GM12878 (cell line): ENCODE measurements at regions of chr3 and their contacts with region 1.

Region 1: GRCh38 chr3:61530355-61530754 is 31.0 kb upstream of the PTPRG start:
- DNase-seq: no peak
- ATAC-seq: peak; percentile 81
- H3K4me3 ChIP-seq: no peak overlapping the region
- H3K27ac ChIP-seq: no peak overlapping the region
- H3K4me1 ChIP-seq: no peaks in the 10 kb centered on the region
- H3K27me3 ChIP-seq: no peaks in the 10 kb centered on the region
- CTCF ChIP-seq: peak; percentile 51 to 53 (median 52)
- EP300 ChIP-seq: no peak
- POLR2A ChIP-seq: no peak
- RAD21 ChIP-seq: peak; percentile 54

Region 2: DNA sequence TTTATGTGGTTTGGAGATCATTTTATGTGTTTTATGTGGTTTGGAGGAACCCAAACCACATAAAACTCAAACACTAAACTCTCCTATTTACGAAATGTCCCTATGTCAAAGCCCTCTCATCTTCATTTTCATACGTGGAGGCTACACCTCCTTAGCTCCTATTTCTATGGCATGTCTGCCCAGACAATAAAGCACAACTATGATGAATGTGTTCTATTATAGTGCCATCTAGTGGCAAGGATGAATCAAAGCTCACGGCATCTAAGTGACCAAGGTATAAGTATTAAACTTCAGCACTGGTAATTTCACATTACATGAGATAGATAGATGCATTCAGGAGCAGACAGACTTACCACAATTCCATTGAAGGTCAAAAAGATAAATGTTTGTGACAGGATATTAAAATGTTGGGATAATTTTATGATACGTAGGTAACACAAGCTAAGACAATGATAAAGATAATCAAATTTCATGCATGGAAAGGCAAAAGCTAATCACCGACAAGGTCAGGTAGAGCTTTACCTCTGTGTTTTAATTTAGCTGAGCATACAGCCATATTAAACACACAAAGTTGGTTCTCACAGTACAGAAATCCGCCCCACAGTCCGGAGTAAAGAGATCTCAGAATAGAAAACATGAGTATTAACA is 148.5 kb before region 1 on chr3:
- CTCF ChIA-PET with region 1: interaction called, 51 read pairs
- POLR2A ChIA-PET with region 1: no interaction called
- RAD21 ChIA-PET with region 1: interaction called, 29 read pairs
- SMC1A ChIA-PET with region 1: interaction called, 23 read pairs
- in situ Hi-C with region 1: no loop called
- intact Hi-C with region 1: loop called (anchors 10 kb)
- DNase-seq: no peak
- ATAC-seq: peak; percentile 99
- H3K4me3 ChIP-seq: no peak overlapping the region
- H3K27ac ChIP-seq: no peak overlapping the region
- H3K4me1 ChIP-seq: no peaks in the 10 kb centered on the region
- H3K27me3 ChIP-seq: no peaks in the 10 kb centered on the region; a peak in 1 of 4 replicates
- CTCF ChIP-seq: peak; percentile 58 to 73 (median 61); a peak in 5 of 6 replicates
- EP300 ChIP-seq: no peak
- POLR2A ChIP-seq: no peak
- RAD21 ChIP-seq: peak; percentile 85

Region 3: DNA sequence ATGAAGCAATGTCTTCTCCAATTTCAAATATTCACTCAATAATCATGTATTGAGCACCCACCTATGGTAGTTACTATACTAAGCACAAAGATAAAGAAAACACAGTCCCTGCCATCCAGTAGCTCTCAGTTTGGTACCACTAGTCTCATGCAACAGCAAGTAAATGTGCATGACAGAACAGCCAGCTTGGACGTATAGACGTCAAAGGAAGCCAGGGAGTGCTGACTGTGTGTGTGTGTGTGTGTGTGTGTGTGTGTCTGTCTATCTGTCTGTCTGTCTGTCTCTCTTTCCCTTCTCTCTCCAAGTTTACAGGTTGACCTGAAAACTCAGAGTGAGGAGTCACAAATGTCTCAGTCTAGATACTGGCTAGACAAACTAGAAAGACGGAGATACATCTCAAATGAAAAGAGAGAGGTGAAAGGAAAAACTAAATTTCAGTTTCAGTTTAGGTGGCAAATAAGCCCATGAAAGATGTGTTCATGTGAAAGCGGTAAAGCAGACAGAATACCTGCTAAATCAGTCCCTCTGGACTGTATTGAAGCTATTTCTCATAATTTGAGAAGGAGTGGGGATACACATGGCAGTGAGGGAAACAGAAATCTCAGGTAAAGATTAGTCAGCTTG is 110.1 kb before region 1 on chr3:
- CTCF ChIA-PET with region 1: interaction called, 29 read pairs
- POLR2A ChIA-PET with region 1: no interaction called
- RAD21 ChIA-PET with region 1: interaction called, 5 read pairs
- SMC1A ChIA-PET with region 1: interaction called, 7 read pairs
- in situ Hi-C with region 1: no loop called
- intact Hi-C with region 1: no loop called
- DNase-seq: no peak
- ATAC-seq: peak; percentile 91
- H3K4me3 ChIP-seq: no peak overlapping the region
- H3K27ac ChIP-seq: no peak overlapping the region
- H3K4me1 ChIP-seq: peaks cover 3% of the 10 kb centered on the region; the same call in 1 of the 2 replicates
- H3K27me3 ChIP-seq: no peaks in the 10 kb centered on the region
- CTCF ChIP-seq: no peak
- EP300 ChIP-seq: peak in 1 of 2 experiments; percentile 46; a peak in 1 of 4 replicates
- POLR2A ChIP-seq: no peak
- RAD21 ChIP-seq: no peak

Region 4: GRCh38 chr3:61452535-61453090 is 77.7 kb before region 1 on chr3:
- CTCF ChIA-PET with region 1: interaction called, 7 read pairs
- POLR2A ChIA-PET with region 1: no interaction called
- RAD21 ChIA-PET with region 1: interaction called, 4 read pairs
- SMC1A ChIA-PET with region 1: interaction called, 14 read pairs
- in situ Hi-C with region 1: no loop called
- intact Hi-C with region 1: no loop called
- DNase-seq: no peak
- ATAC-seq: no peak
- H3K4me3 ChIP-seq: no peak overlapping the region
- H3K27ac ChIP-seq: no peak overlapping the region
- H3K4me1 ChIP-seq: no peaks in the 10 kb centered on the region
- H3K27me3 ChIP-seq: no peaks in the 10 kb centered on the region
- CTCF ChIP-seq: no peak
- EP300 ChIP-seq: no peak
- POLR2A ChIP-seq: no peak
- RAD21 ChIP-seq: no peak

Region 5: DNA sequence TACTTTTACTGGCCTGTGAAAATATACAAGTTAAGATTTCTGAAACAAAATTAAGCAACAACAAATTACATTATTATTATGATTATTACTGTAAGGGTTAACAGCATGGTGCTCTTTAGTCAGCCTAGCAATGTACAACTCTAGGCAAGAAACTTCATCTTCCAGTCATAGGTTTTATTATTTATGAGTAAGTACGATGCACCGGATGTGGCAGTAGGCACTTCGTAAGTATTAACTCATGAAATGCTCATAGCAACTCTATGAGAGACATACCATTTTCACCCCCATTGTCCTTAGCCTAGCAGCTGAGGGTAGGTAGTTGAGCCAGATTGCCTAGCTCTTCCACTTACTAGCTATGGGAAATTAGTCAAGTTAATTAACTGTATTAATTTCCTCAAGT is 37.0 kb before region 1 on chr3:
- CTCF ChIA-PET with region 1: interaction called, 11 read pairs
- POLR2A ChIA-PET with region 1: no interaction called
- RAD21 ChIA-PET with region 1: interaction called, 3 read pairs
- SMC1A ChIA-PET with region 1: interaction called, 10 read pairs
- in situ Hi-C with region 1: no loop called
- intact Hi-C with region 1: no loop called
- DNase-seq: no peak
- ATAC-seq: no peak
- H3K4me3 ChIP-seq: no peak overlapping the region
- H3K27ac ChIP-seq: no peak overlapping the region
- H3K4me1 ChIP-seq: no peaks in the 10 kb centered on the region
- H3K27me3 ChIP-seq: no peaks in the 10 kb centered on the region; a peak in 1 of 4 replicates
- CTCF ChIP-seq: no peak
- EP300 ChIP-seq: no peak
- POLR2A ChIP-seq: no peak
- RAD21 ChIP-seq: no peak

Region 6: DNA sequence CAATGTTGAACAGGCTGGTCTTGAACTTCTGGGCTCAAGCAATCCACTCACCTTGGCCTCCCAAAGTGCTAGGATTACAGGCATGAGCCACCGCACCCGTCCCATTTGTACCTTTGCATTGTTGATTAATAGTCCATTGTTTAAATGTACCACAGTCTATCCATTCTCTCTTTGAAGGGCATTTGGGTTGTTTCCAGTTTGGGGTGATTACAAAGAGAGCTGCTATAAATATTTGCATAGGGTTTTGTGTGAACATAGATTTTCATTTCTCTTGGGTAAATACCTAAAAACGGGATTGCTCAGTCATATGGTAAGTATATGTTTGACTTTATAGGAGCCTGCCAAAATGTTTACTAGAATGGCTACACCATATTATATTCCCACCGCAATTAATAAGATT is 17.3 kb after region 1 on chr3:
- CTCF ChIA-PET with region 1: interaction called, 36 read pairs
- POLR2A ChIA-PET with region 1: interaction called, 3 read pairs
- RAD21 ChIA-PET with region 1: interaction called, 6 read pairs
- SMC1A ChIA-PET with region 1: interaction called, 41 read pairs
- in situ Hi-C with region 1: no loop called
- intact Hi-C with region 1: no loop called
- DNase-seq: no peak
- ATAC-seq: peak; percentile 84
- H3K4me3 ChIP-seq: no peak overlapping the region
- H3K27ac ChIP-seq: no peak overlapping the region
- H3K4me1 ChIP-seq: no peaks in the 10 kb centered on the region
- H3K27me3 ChIP-seq: no peaks in the 10 kb centered on the region
- CTCF ChIP-seq: no peak
- EP300 ChIP-seq: peak in 1 of 2 experiments; percentile 70; a peak in 1 of 4 replicates
- POLR2A ChIP-seq: no peak
- RAD21 ChIP-seq: no peak

Region 7: GRCh38 chr3:61664095-61664482 is 133.7 kb after region 1 on chr3:
- CTCF ChIA-PET with region 1: no interaction called
- POLR2A ChIA-PET with region 1: no interaction called
- RAD21 ChIA-PET with region 1: no interaction called
- SMC1A ChIA-PET with region 1: no interaction called
- in situ Hi-C with region 1: no loop called
- intact Hi-C with region 1: no loop called
- DNase-seq: no peak
- ATAC-seq: peak; percentile 25
- H3K4me3 ChIP-seq: no peak overlapping the region
- H3K27ac ChIP-seq: no peak overlapping the region
- H3K4me1 ChIP-seq: no peaks in the 10 kb centered on the region
- H3K27me3 ChIP-seq: no peaks in the 10 kb centered on the region
- CTCF ChIP-seq: no peak
- EP300 ChIP-seq: no peak
- POLR2A ChIP-seq: no peak
- RAD21 ChIP-seq: no peak